GM12878 (cell line): ENCODE measurements at regions of chr10 and their contacts with region 1.

Region 1: GRCh38 chr10:178208-178607 is 43.0 kb downstream of the ZMYND11 start:
- DNase-seq: no peak
- ATAC-seq: peak; percentile 46; the same call in 2 of the 3 replicates
- H3K4me3 ChIP-seq: no peak overlapping the region
- H3K27ac ChIP-seq: no peak overlapping the region
- H3K4me1 ChIP-seq: no peaks in the 10 kb centered on the region; the same call in 1 of the 2 replicates
- H3K27me3 ChIP-seq: no peaks in the 10 kb centered on the region
- CTCF ChIP-seq: peak; percentile 21 to 51 (median 28); a peak in 5 of 6 replicates
- EP300 ChIP-seq: no peak
- POLR2A ChIP-seq: no peak
- RAD21 ChIP-seq: peak; percentile 45

Region 2: GRCh38 chr10:191711-192518 is 13.7 kb after region 1 on chr10:
- CTCF ChIA-PET with region 1: no interaction called
- POLR2A ChIA-PET with region 1: no interaction called
- RAD21 ChIA-PET with region 1: no interaction called
- SMC1A ChIA-PET with region 1: no interaction called
- in situ Hi-C with region 1: no loop called
- intact Hi-C with region 1: no loop called
- DNase-seq: no peak
- ATAC-seq: no peak
- H3K4me3 ChIP-seq: no peak overlapping the region
- H3K27ac ChIP-seq: no peak overlapping the region
- H3K4me1 ChIP-seq: no peaks in the 10 kb centered on the region
- H3K27me3 ChIP-seq: no peaks in the 10 kb centered on the region
- CTCF ChIP-seq: no peak
- EP300 ChIP-seq: no peak
- POLR2A ChIP-seq: no peak
- RAD21 ChIP-seq: no peak

Region 3: GRCh38 chr10:373522-374309 is 195.5 kb after region 1 on chr10:
- CTCF ChIA-PET with region 1: no interaction called
- POLR2A ChIA-PET with region 1: no interaction called
- RAD21 ChIA-PET with region 1: no interaction called
- SMC1A ChIA-PET with region 1: no interaction called
- in situ Hi-C with region 1: no loop called
- intact Hi-C with region 1: no loop called
- DNase-seq: no peak
- ATAC-seq: no peak
- H3K4me3 ChIP-seq: no peak overlapping the region
- H3K27ac ChIP-seq: no peak overlapping the region
- H3K4me1 ChIP-seq: no peaks in the 10 kb centered on the region
- H3K27me3 ChIP-seq: no peaks in the 10 kb centered on the region; a peak in 1 of 4 replicates
- CTCF ChIP-seq: no peak
- EP300 ChIP-seq: no peak
- POLR2A ChIP-seq: no peak
- RAD21 ChIP-seq: no peak

Region 4: GRCh38 chr10:851901-852300 is 673.7 kb after region 1 on chr10:
- CTCF ChIA-PET with region 1: no interaction called
- POLR2A ChIA-PET with region 1: interaction called, 10 read pairs
- RAD21 ChIA-PET with region 1: no interaction called
- SMC1A ChIA-PET with region 1: no interaction called
- in situ Hi-C with region 1: no loop called
- intact Hi-C with region 1: no loop called
- DNase-seq: peak; percentile 45
- ATAC-seq: peak; percentile 96
- H3K4me3 ChIP-seq: 0 out of 2 replicates have a peak overlapping the region, but pooled peaks have one; percentile 26
- H3K27ac ChIP-seq: peak overlapping the region; percentile 65
- H3K4me1 ChIP-seq: peaks cover 12% of the 10 kb centered on the region
- H3K27me3 ChIP-seq: no peaks in the 10 kb centered on the region
- CTCF ChIP-seq: no peak
- EP300 ChIP-seq: peak; percentile 27 to 64; a peak in 1 of 4 replicates
- POLR2A ChIP-seq: no peak
- RAD21 ChIP-seq: no peak